ENCODE measurements at regions of chr14 and their contacts with region 1.

Region 1: GRCh38 chr14:57244106-57244505 is 24.6 kb downstream of the EXOC5 start:
- DNase-seq: no peak
- ATAC-seq: peak in 1 of 4 donors; percentile 57
- H3K4me3 ChIP-seq: no peak overlapping the region
- H3K27ac ChIP-seq: no peak overlapping the region
- H3K4me1 ChIP-seq: peaks cover 0 to 2% (median 0%) of the 10 kb centered on the region in 12 donors
- H3K27me3 ChIP-seq: no peaks in the 10 kb centered on the region
- CTCF ChIP-seq: no peak
- POLR2A ChIP-seq: no peak

Region 2: DNA sequence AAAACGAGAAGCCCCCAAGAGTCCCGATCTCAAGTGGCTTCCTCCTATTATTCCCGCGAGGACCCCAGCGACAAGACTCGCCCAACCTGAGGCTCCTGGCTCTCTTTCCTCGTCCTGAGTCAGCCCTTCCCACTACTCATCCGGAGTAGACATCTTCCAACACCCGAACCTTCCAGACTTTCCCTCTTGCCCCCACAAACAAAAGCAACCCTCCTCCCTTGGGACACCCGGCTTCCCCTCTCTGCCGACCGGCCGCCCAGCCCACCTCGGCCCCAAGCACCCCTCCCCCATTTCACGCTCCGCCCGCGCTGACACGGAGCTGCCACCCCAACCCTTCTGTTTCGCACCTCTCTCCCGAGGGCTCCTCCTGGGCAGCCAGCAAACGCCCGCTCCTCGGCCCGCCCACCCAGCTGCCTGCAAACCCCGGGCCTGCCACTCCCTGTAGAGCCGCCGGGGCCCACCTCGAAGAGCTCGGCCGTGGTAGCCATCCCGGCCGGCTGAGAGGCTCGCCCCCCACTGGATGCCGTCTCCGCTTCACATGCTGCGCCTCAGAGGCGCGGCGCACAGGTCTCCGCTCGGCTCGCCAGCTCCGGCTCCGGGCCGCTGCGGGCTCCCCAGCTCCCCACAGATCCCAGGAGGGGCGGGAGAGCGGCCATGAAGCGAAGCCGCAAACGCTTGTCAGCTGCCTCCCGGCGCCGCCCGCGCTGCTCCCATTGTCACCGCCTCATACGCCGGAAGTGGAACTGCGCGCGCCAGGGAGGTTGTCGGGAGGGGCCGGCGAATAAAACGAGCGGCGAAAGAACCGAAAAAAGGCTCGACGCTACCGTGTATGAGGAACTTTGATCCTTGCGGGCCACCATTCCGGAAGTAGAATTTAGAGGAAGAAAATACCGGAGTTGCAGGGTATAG is 24.3 kb after region 1 on chr14 and contains the starts of genes AP5M1 and EXOC5:
- intact Hi-C with region 1: loop called in 1 of 10 experiments (anchors 2 kb)
- DNase-seq: peak; percentile 93 to 95 (median 94)
- ATAC-seq: peak; percentile 94 to 98 (median 96)
- H3K4me3 ChIP-seq: peak within 1 kb of the TSS; percentile 70 to 95 (median 78)
- H3K27ac ChIP-seq: peak within 1 kb of the TSS; percentile 82 to 98 (median 96)
- H3K4me1 ChIP-seq: peaks cover 0 to 59% (median 48%) of the 10 kb centered on the region in 12 donors
- H3K27me3 ChIP-seq: no peaks in the 10 kb centered on the region
- CTCF ChIP-seq: peak in 1 of 12 donors; percentile 5
- POLR2A ChIP-seq: no peak
- total RNA-seq, gene AP5M1: 20.6 to 58.1 (median 49.7) TPM
- total RNA-seq, gene EXOC5: 27.7 to 74.8 (median 53.0) TPM

Region 3: DNA sequence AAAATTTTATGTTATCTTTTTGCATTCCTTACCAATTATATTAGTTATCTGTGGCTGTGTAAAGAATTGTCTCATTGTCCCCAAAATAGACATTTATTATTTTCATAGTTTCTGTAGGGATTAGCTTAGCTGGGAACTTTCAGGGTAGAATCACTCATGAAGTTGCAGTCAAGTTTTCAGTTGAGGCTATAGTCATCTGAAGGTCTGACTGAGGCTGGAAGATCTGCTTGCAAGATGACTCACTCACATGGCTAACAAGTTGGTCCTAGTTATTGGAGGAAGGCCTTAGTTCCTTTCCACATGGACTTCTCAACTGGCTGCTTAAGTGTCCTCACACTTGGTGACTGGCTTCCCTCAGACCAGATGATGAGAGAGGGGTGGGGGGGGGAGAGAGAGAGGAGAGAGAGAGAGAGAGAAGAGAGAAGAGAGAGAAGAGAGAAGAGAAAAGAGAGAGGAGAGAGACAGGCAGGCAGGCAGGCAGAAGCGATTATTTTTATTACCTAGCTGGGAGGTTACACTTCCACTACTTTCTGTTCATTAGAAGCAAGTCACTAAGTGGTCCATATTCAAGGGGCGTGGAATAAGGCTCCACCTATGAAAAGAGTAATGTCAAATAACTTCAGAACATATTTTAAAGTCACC is 31.0 kb after region 1 on chr14:
- intact Hi-C with region 1: loop called in 1 of 10 experiments (anchors 5 kb)
- DNase-seq: no peak
- ATAC-seq: no peak
- H3K4me3 ChIP-seq: no peak overlapping the region
- H3K27ac ChIP-seq: no peak overlapping the region
- H3K4me1 ChIP-seq: peaks cover 0 to 26% (median 17%) of the 10 kb centered on the region in 12 donors
- H3K27me3 ChIP-seq: no peaks in the 10 kb centered on the region
- CTCF ChIP-seq: no peak
- POLR2A ChIP-seq: no peak

Region 4: GRCh38 chr14:57302883-57303282 is 58.8 kb after region 1 on chr14:
- intact Hi-C with region 1: no loop called
- DNase-seq: no peak
- ATAC-seq: no peak
- H3K4me3 ChIP-seq: no peak overlapping the region
- H3K27ac ChIP-seq: no peak overlapping the region
- H3K4me1 ChIP-seq: no peaks in the 10 kb centered on the region
- H3K27me3 ChIP-seq: peaks cover 0 to 9% (median 0%) of the 10 kb centered on the region in 9 donors
- CTCF ChIP-seq: no peak
- POLR2A ChIP-seq: no peak

Region 5: GRCh38 chr14:57346741-57347140 is 102.6 kb after region 1 on chr14:
- intact Hi-C with region 1: no loop called
- DNase-seq: no peak
- ATAC-seq: no peak
- H3K4me3 ChIP-seq: no peak overlapping the region
- H3K27ac ChIP-seq: no peak overlapping the region
- H3K4me1 ChIP-seq: no peaks in the 10 kb centered on the region
- H3K27me3 ChIP-seq: peaks cover 0 to 4% (median 0%) of the 10 kb centered on the region in 9 donors
- CTCF ChIP-seq: no peak
- POLR2A ChIP-seq: no peak

Measured in heart left ventricle (tissue), 16 donors.